ENCODE measurements at regions of chr12 and their contacts with region 1.

Region 1: GRCh38 chr12:31959161-31959700 is at the start of gene RESF1:
- DNase-seq: peak; percentile 91 to 95 (median 93)
- ATAC-seq: peak; percentile 94 to 99 (median 98)
- H3K4me3 ChIP-seq: peak within 1 kb of the TSS; percentile 58 to 92 (median 74)
- H3K27ac ChIP-seq: peak within 1 kb of the TSS; percentile 90 to 97 (median 94)
- H3K4me1 ChIP-seq: peaks cover 0 to 47% (median 27%) of the 10 kb centered on the region in 12 donors
- H3K27me3 ChIP-seq: no peaks in the 10 kb centered on the region
- CTCF ChIP-seq: peak in 2 of 12 donors; percentile 7
- POLR2A ChIP-seq: peak in 1 of 2 donors; percentile 85
- total RNA-seq, gene RESF1: 13.7 to 42.8 (median 22.8) TPM

Region 2: GRCh38 chr12:31682136-31682962 is 276.9 kb before region 1 on chr12:
- intact Hi-C with region 1: loop called in 2 of 10 experiments (anchors 5 to 10 kb)
- DNase-seq: peak in 4 of 5 donors; percentile 34 to 56 (median 43)
- ATAC-seq: peak; percentile 58 to 88 (median 78)
- H3K4me3 ChIP-seq: no peak overlapping the region
- H3K27ac ChIP-seq: no peak overlapping the region
- H3K4me1 ChIP-seq: peaks cover 0 to 11% (median 0%) of the 10 kb centered on the region in 12 donors
- H3K27me3 ChIP-seq: no peaks in the 10 kb centered on the region
- CTCF ChIP-seq: peak; percentile 48 to 73 (median 66)
- POLR2A ChIP-seq: no peak

Region 3: DNA sequence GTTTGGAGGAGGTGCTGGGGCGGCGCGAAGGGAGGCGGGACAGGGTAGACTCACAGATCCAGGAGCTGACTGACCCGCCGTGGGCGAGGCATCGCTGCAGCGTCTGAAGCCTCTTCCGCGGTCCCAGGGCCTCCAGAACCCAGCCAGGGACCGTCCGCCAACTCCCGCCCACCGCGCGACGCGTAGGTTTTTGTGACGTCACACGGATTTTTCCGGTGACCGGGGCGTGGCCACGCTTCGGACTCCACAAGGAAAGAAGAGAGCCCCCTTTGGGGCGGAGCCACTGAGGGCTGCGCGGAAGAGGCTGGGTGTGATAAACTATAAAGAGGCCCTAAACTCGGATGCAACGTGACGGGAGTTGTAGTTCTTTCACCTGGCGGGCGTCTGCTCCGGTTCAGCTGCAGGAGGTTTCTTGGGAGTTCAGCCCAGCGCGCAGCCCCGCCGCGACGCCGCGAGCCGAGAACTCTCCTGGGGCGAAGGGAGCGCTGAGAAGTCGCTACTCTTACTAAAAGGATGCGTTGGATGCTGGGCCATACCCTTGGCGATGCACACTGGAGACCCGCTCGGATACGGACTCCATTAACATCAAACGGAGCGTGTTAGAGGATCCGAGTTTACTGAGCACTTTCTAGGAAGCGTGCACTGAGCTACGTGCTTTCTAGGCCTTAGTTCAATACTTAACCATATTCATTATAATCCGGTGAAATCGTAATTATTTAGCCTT is 230.2 kb before region 1 on chr12 and contains the start of gene AMN1:
- intact Hi-C with region 1: loop called in 9 of 10 experiments (anchors 1 to 10 kb)
- DNase-seq: peak; percentile 98 to 100 (median 99)
- ATAC-seq: peak; percentile 96 to 98 (median 98)
- H3K4me3 ChIP-seq: peak within 1 kb of the TSS; percentile 46 to 85 (median 63)
- H3K27ac ChIP-seq: peak within 1 kb of the TSS; percentile 92 to 98 (median 95)
- H3K4me1 ChIP-seq: peaks cover 0 to 83% (median 41%) of the 10 kb centered on the region in 12 donors
- H3K27me3 ChIP-seq: no peaks in the 10 kb centered on the region
- CTCF ChIP-seq: peak in 3 of 12 donors; percentile 14 to 35 (median 18)
- POLR2A ChIP-seq: peak in 1 of 2 donors; percentile 84
- total RNA-seq, gene AMN1: 8.5 to 22.5 (median 16.4) TPM

Region 4: DNA sequence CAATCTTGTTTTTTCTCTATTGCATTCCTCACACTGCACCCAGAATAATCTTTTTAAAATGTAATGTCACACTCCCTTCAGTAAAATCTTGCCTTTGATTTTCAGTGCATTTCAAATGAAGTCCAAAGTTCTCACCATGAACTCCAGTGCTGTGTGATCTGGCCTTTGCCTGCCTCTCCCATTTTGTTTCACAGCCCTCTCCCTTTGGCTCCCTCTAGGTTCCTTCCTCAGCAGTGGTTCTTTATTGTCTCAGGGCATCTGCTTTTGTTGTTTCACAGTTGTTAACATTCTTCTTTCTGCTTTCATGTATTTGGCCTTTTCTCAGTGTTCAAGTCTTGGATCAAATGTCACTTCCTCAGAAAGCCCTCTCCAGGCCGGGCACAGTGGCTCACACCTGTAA is 145.9 kb before region 1 on chr12:
- intact Hi-C with region 1: loop called in 1 of 10 experiments (anchors 10 kb)
- DNase-seq: no peak
- ATAC-seq: no peak
- H3K4me3 ChIP-seq: no peak overlapping the region
- H3K27ac ChIP-seq: no peak overlapping the region
- H3K4me1 ChIP-seq: peaks cover 0 to 16% (median 0%) of the 10 kb centered on the region in 12 donors
- H3K27me3 ChIP-seq: no peaks in the 10 kb centered on the region
- CTCF ChIP-seq: peak in 1 of 12 donors; percentile 12
- POLR2A ChIP-seq: no peak

Region 5: GRCh38 chr12:31832740-31833729 is 126.2 kb before region 1 on chr12:
- intact Hi-C with region 1: loop called in 1 of 10 experiments (anchors 10 kb)
- DNase-seq: peak in 2 of 5 donors; percentile 12 to 18
- ATAC-seq: peak in 3 of 4 donors; percentile 36 to 66 (median 62)
- H3K4me3 ChIP-seq: no peak overlapping the region
- H3K27ac ChIP-seq: peak overlapping the region in 2 of 12 donors; percentile 39 to 85
- H3K4me1 ChIP-seq: peaks cover 0 to 32% (median 0%) of the 10 kb centered on the region in 12 donors
- H3K27me3 ChIP-seq: no peaks in the 10 kb centered on the region
- CTCF ChIP-seq: no peak
- POLR2A ChIP-seq: no peak

Region 6: GRCh38 chr12:31874961-31875608 is 84.1 kb before region 1 on chr12:
- intact Hi-C with region 1: loop called in 3 of 10 experiments (anchors 5 to 10 kb)
- DNase-seq: peak; percentile 65 to 82 (median 70)
- ATAC-seq: peak; percentile 82 to 96 (median 90)
- H3K4me3 ChIP-seq: no peak overlapping the region
- H3K27ac ChIP-seq: peak overlapping the region; percentile 30 to 90 (median 70)
- H3K4me1 ChIP-seq: peaks cover 0 to 27% (median 8%) of the 10 kb centered on the region in 12 donors
- H3K27me3 ChIP-seq: no peaks in the 10 kb centered on the region
- CTCF ChIP-seq: no peak
- POLR2A ChIP-seq: no peak

Region 7: GRCh38 chr12:32106517-32107358 is 147.5 kb after region 1 on chr12 and contains the start of gene BICD1:
- intact Hi-C with region 1: loop called in 1 of 10 experiments (anchors 5 kb)
- DNase-seq: peak; percentile 93 to 95 (median 93)
- ATAC-seq: peak; percentile 88 to 98 (median 98)
- H3K4me3 ChIP-seq: peak within 1 kb of the TSS; percentile 68 to 98 (median 89)
- H3K27ac ChIP-seq: peak within 1 kb of the TSS; percentile 63 to 96 (median 86)
- H3K4me1 ChIP-seq: peaks cover 0 to 50% (median 27%) of the 10 kb centered on the region in 12 donors
- H3K27me3 ChIP-seq: no peaks in the 10 kb centered on the region
- CTCF ChIP-seq: peak in 10 of 12 donors; percentile 13 to 75 (median 49)
- POLR2A ChIP-seq: peak in 1 of 2 donors; percentile 88
- total RNA-seq, gene BICD1: 2.1 to 16.3 (median 8.9) TPM